ENCODE measurements at regions of chr14 and their contacts with region 1.

Region 1: GRCh38 chr14:93115069-93115820 is 480 bp downstream of the ITPK1 start:
- DNase-seq: peak in 1 of 2 experiments; percentile 84
- H3K4me3 ChIP-seq: peak overlapping the region; percentile 77 to 100 (median 88)
- H3K27ac ChIP-seq: no peak overlapping the region; the same call in 1 of the 2 replicates
- H3K4me1 ChIP-seq: peaks cover 10 to 17% (median 12%) of the 10 kb centered on the region in 4 experiments
- H3K27me3 ChIP-seq: no peaks in the 10 kb centered on the region
- CTCF ChIP-seq: no peak
- EP300 ChIP-seq: no peak
- POLR2A ChIP-seq: no peak
- RAD21 ChIP-seq: no peak

Region 2: DNA sequence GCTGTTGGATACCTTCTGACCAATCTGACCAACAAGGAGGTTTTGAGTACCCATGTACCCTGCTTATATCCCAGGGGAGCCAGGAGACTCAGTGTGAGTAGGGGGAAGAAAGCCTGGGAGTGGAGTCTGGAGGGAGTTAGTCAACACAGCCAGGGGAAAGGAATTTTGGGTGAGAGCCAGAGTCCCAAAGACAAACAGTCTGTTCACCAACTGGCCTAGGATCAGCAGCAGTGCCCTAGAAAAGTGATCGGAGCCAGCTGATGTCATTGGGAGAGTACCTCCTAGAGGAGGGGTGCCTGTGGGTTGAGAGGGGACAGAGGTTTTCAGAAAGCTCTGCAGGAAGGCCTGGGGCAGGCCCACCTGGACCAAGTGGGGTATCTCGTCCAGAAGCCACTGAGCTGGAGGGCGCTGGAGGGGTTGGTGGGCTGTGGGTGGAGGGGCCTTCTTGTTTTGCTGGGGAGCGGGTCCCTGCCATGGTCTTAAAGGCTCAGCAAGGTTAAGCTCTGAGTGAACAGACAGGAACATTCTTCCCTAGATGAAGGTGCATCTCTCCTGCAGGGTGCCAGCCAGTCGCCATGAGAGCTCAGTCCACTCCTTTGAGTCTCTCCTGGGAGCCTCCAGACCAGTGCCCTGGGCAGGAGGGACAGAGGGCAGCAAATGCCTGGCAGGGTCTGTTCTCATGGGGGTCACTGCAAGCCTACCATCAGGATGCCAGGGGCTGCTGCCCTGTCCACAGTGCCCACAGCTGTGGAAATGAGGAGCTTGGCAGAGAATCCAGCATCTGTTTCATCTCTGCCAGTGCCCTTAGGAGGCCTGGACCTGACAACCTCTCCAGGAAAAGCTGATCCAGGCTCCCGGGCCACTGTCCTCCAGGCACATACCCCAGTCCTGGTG is 128.7 kb before region 1 on chr14:
- CTCF ChIA-PET with region 1: interaction called, 10 read pairs
- POLR2A ChIA-PET with region 1: no interaction called
- DNase-seq: no peak
- H3K4me3 ChIP-seq: no peak overlapping the region
- H3K27ac ChIP-seq: no peak overlapping the region
- H3K4me1 ChIP-seq: peaks cover 0 to 6% (median 0%) of the 10 kb centered on the region in 4 experiments; a peak in 1 of 7 replicates
- H3K27me3 ChIP-seq: no peaks in the 10 kb centered on the region
- CTCF ChIP-seq: no peak
- EP300 ChIP-seq: no peak
- POLR2A ChIP-seq: no peak
- RAD21 ChIP-seq: no peak

Region 3: GRCh38 chr14:93033983-93034670 is 81.1 kb before region 1 on chr14:
- CTCF ChIA-PET with region 1: interaction called, 17 read pairs
- POLR2A ChIA-PET with region 1: no interaction called
- DNase-seq: no peak
- H3K4me3 ChIP-seq: no peak overlapping the region
- H3K27ac ChIP-seq: no peak overlapping the region
- H3K4me1 ChIP-seq: peaks cover 10 to 39% (median 25%) of the 10 kb centered on the region in 4 experiments
- H3K27me3 ChIP-seq: no peaks in the 10 kb centered on the region
- CTCF ChIP-seq: peak; percentile 67 to 74 (median 71)
- EP300 ChIP-seq: no peak
- POLR2A ChIP-seq: no peak
- RAD21 ChIP-seq: peak; percentile 58 to 70

Region 4: DNA sequence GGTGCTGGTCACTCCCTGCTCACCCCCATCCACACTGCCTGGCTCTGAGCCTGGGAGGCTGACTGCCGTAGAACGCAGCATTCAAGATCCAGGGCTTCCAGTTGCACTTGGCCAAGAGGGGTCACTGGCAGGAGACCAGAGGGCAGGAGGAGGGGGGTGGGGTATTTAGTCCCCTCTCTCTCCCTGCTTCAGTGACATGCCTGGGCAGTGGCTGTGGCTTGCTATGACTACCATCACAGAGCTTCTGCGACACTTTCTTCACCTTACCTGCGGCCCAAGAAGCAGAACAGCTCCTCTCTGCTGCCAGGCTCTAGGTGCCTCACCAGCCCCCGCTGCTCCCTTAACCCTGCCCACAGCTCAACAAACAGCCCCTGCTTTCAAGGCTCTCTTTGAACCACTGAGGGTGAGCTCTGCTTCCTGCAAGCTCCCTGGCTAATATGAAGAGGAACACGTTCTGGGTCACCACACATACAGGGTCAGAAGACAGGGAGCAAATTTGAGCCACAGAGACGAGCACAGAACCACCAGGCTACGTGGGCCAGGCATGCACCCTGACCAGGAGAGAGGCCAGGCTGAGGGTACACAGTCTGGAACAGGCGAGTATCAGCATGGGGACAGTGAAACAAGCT is 55.2 kb before region 1 on chr14:
- CTCF ChIA-PET with region 1: interaction called, 11 read pairs
- POLR2A ChIA-PET with region 1: no interaction called
- DNase-seq: no peak
- H3K4me3 ChIP-seq: no peak overlapping the region
- H3K27ac ChIP-seq: peak overlapping the region; percentile 18; the same call in 1 of the 2 replicates
- H3K4me1 ChIP-seq: peaks cover 4 to 31% (median 17%) of the 10 kb centered on the region in 4 experiments
- H3K27me3 ChIP-seq: no peaks in the 10 kb centered on the region
- CTCF ChIP-seq: no peak
- EP300 ChIP-seq: no peak
- POLR2A ChIP-seq: no peak
- RAD21 ChIP-seq: no peak

Region 5: DNA sequence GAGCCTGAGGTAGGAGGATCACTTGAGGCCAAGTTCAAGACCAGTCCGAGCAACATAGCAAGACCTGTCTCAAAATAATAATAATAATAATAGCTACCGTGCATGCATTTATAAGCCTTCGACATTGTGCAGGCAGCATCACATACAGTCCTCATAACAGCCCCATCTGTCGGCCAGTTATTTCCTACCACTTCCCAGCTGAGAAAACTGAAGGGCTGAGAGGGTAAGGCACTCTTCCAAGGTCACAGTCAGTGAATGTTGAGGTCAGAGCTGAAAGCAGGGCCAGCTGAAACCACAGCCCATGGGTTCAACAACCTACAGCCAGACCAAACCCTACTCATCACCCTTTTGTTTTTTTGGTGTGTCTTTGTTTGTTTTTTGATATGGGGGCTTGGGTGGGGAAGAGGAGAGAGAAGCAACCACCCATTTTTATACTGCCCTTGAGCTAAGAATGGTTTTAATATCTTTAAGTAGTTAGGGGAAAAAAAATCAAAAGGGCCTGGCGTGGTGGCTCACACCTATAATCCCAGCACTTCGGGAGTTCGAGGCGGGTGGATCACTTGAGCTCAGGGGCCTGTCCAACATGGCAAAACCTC is 17.3 kb after region 1 on chr14:
- CTCF ChIA-PET with region 1: interaction called, 69 read pairs
- POLR2A ChIA-PET with region 1: interaction called, 12 read pairs
- DNase-seq: no peak
- H3K4me3 ChIP-seq: no peak overlapping the region
- H3K27ac ChIP-seq: no peak overlapping the region
- H3K4me1 ChIP-seq: no peaks in the 10 kb centered on the region; a peak in 1 of 7 replicates
- H3K27me3 ChIP-seq: no peaks in the 10 kb centered on the region
- CTCF ChIP-seq: peak; percentile 42 to 66 (median 48); a peak in 3 of 4 replicates
- EP300 ChIP-seq: no peak
- POLR2A ChIP-seq: no peak
- RAD21 ChIP-seq: peak; percentile 15 to 31; a peak in 1 of 4 replicates

Region 6: GRCh38 chr14:93160353-93160801 is 45.1 kb after region 1 on chr14:
- CTCF ChIA-PET with region 1: interaction called, 16 read pairs
- POLR2A ChIA-PET with region 1: no interaction called
- DNase-seq: no peak
- H3K4me3 ChIP-seq: no peak overlapping the region
- H3K27ac ChIP-seq: no peak overlapping the region
- H3K4me1 ChIP-seq: no peaks in the 10 kb centered on the region; a peak in 3 of 7 replicates
- H3K27me3 ChIP-seq: no peaks in the 10 kb centered on the region
- CTCF ChIP-seq: peak; percentile 53 to 61 (median 58)
- EP300 ChIP-seq: no peak
- POLR2A ChIP-seq: no peak
- RAD21 ChIP-seq: peak; percentile 64 to 75

Region 7: GRCh38 chr14:93295541-93296220 is 180.4 kb after region 1 on chr14:
- CTCF ChIA-PET with region 1: no interaction called
- POLR2A ChIA-PET with region 1: no interaction called
- DNase-seq: no peak
- H3K4me3 ChIP-seq: no peak overlapping the region
- H3K27ac ChIP-seq: no peak overlapping the region
- H3K4me1 ChIP-seq: peaks cover 0 to 5% (median 2%) of the 10 kb centered on the region in 4 experiments; a peak in 2 of 7 replicates
- H3K27me3 ChIP-seq: no peaks in the 10 kb centered on the region
- CTCF ChIP-seq: no peak
- EP300 ChIP-seq: no peak
- POLR2A ChIP-seq: no peak
- RAD21 ChIP-seq: no peak

Region 8: GRCh38 chr14:93337143-93337753 is 222.0 kb after region 1 on chr14:
- CTCF ChIA-PET with region 1: no interaction called
- POLR2A ChIA-PET with region 1: no interaction called
- DNase-seq: no peak
- H3K4me3 ChIP-seq: no peak overlapping the region
- H3K27ac ChIP-seq: no peak overlapping the region
- H3K4me1 ChIP-seq: peaks cover 2 to 8% (median 3%) of the 10 kb centered on the region in 4 experiments; a peak in 6 of 7 replicates
- H3K27me3 ChIP-seq: no peaks in the 10 kb centered on the region
- CTCF ChIP-seq: peak; percentile 53 to 73 (median 66)
- EP300 ChIP-seq: no peak
- POLR2A ChIP-seq: no peak
- RAD21 ChIP-seq: peak; percentile 68 to 74

Region 9: GRCh38 chr14:93493054-93493453 is 377.8 kb after region 1 on chr14:
- CTCF ChIA-PET with region 1: no interaction called
- POLR2A ChIA-PET with region 1: no interaction called
- DNase-seq: no peak
- H3K4me3 ChIP-seq: no peak overlapping the region
- H3K27ac ChIP-seq: no peak overlapping the region
- H3K4me1 ChIP-seq: no peaks in the 10 kb centered on the region
- H3K27me3 ChIP-seq: no peaks in the 10 kb centered on the region
- CTCF ChIP-seq: no peak
- EP300 ChIP-seq: no peak
- POLR2A ChIP-seq: no peak
- RAD21 ChIP-seq: no peak